Endothelial cell of umbilical vein (primary cell): ENCODE measurements at regions of chr4 and their contacts with region 1.

Region 1: DNA sequence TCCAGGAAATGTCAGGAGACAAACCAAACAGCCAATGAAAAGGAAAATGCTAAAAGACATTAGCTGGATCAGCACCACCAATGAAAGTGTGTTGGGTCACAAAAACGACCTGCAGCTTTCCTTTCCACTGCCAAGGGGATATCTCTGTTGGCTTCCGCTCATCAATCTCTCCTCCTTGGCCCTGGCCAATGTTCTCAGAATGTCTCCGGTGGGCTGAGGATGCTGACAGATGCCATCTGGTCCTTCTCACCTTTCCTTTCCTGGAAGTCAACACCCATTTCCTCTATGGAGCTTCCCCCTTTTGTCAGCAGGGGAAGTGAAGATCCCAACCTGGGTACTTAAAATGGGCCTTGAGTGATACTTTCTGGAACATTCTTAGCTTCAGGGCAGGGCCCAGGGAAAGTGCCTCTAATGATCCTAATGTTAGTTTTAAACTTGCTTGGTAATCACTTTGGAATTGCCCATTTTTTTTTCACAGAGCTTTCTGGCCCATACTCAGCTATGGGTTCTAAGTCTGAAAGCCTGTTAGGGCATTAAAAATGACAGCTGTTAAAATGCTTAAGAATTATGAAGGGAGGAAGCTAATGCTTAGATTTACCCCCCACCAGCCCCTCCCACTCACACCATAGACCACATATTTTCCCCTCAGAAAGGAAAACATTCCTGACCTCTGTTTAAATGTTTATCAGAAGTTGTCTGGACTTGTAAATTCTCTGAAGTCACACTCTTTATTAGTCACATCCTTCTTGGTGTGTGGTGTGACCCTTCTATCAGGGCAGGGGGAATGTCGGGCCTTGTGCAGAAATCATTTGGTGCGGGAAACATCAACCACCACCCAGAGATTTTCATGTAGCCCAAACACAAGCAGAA is 29.2 kb downstream of the IGFBP7 start:
- DNase-seq: peak; percentile 99
- H3K4me3 ChIP-seq: no peak overlapping the region
- H3K27ac ChIP-seq: peak overlapping the region; percentile 100
- H3K4me1 ChIP-seq: peaks cover 81% of the 10 kb centered on the region
- H3K27me3 ChIP-seq: no peaks in the 10 kb centered on the region
- CTCF ChIP-seq: no peak
- POLR2A ChIP-seq: peak; percentile 25

Region 2: DNA sequence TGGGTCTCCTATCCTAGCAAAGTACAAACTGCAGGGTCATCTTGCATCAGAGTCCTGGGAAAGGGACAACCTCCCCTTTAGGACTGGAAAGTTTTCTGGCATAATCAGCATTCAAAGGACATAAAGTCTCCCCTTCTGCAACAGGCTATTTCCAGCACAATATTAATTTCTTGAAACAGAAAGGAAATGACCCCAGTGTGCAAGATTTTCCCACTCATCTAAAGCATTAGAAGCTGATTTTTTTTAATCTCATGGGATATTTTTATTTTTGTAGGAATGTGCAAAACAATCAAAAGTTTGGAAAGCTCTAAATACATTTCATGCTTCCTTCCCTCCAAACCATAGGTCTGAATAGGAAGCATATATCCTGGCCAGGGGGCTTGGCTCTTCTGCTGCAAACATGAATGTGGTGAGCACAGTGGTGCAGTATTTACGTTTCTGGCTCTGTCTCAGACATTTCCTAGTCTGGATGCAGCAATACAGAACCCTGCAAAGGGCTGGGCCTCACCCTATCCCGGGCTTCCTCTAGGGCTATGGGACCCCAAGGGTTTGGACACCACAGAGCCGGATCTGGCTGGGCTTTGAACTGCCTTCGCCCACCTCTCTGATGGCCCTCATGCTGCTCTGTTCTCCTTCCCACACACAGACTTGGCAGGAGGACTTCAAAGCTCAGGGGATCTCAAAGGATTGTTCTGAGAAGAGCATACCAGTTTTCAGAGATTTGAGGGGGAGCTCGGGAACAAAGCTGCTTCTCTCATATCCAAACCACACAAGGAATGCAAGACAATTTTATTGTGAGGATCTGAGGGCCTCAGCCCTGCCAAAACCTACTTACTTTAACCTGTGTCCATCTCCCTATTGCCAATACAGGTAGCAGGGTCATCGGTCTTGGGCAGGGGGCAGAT is 37.4 kb before region 1 on chr4:
- CTCF ChIA-PET with region 1: interaction called, 7 read pairs
- POLR2A ChIA-PET with region 1: interaction called, 3 read pairs
- dilution Hi-C with region 1: no loop called
- intact Hi-C with region 1: loop called (anchors 2 kb)
- DNase-seq: peak; percentile 82
- H3K4me3 ChIP-seq: no peak overlapping the region
- H3K27ac ChIP-seq: no peak overlapping the region
- H3K4me1 ChIP-seq: peaks cover 25% of the 10 kb centered on the region
- H3K27me3 ChIP-seq: no peaks in the 10 kb centered on the region
- CTCF ChIP-seq: no peak
- POLR2A ChIP-seq: no peak

Region 3: GRCh38 chr4:57091657-57092162 is 10.7 kb after region 1 on chr4:
- CTCF ChIA-PET with region 1: interaction called, 12 read pairs
- POLR2A ChIA-PET with region 1: interaction called, 3 read pairs
- dilution Hi-C with region 1: no loop called
- intact Hi-C with region 1: loop called (anchors 1 kb)
- DNase-seq: no peak
- H3K4me3 ChIP-seq: no peak overlapping the region
- H3K27ac ChIP-seq: peak overlapping the region; percentile 35
- H3K4me1 ChIP-seq: peaks cover 48% of the 10 kb centered on the region
- H3K27me3 ChIP-seq: no peaks in the 10 kb centered on the region
- CTCF ChIP-seq: no peak
- POLR2A ChIP-seq: no peak

Region 4: DNA sequence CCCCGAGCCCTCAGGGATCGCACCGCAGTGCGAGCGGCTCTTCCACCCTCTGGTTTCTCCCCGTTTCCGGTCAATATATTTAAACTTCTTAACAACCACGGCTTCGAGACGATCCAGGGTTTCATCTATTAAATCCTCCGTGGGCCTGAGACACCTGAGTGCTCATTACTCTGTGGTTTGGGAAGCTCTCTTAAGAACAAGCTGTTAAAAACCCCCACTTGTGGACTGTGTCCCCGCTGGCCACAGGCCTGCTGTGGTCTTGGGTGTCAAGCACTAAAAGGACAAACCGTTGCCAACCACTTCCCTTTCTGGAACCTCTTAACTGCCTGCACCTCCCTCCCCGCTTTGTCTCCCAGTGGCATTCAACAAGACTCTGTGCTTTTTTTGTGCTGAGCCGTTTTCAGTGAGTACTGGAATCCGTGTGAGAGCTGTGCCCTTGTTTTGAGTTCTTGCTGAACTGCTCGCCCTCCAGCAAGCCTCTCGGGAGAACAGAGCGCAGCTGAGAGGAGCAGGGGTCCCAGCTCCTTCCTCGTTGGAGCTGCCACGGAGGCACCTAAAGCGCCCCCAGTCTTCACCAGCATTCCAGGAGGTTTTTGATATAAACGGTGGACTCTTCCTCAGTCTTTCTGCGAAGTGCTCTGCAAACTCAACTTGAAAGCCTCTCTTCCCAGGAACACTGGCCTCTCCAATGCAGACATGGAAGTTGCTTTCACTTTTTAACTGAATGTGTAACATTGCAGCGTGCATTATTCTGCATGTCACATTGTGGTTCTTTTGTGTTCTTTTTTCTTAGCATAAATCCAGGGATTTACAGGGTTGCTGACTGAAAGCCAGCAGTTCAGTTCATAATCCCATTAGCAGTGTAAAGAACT is 29.9 kb after region 1 on chr4:
- CTCF ChIA-PET with region 1: interaction called, 10 read pairs
- POLR2A ChIA-PET with region 1: interaction called, 15 read pairs
- dilution Hi-C with region 1: no loop called
- intact Hi-C with region 1: loop called (anchors 1 kb)
- DNase-seq: peak; percentile 82
- H3K4me3 ChIP-seq: peak overlapping the region; percentile 20 to 85 (median 52)
- H3K27ac ChIP-seq: peak overlapping the region; percentile 54
- H3K4me1 ChIP-seq: peaks cover 21% of the 10 kb centered on the region
- H3K27me3 ChIP-seq: no peaks in the 10 kb centered on the region
- CTCF ChIP-seq: no peak
- POLR2A ChIP-seq: no peak